BJ (cell line): ENCODE measurements at regions of chr9 and their contacts with region 1.

Region 1: GRCh38 chr9:133342069-133342406 is 5.9 kb downstream of the MED22 start:
- DNase-seq: no peak
- H3K4me3 ChIP-seq: no peak overlapping the region
- H3K27me3 ChIP-seq: no peaks in the 10 kb centered on the region
- CTCF ChIP-seq: peak; percentile 16; the same call in 1 of the 2 replicates

Region 2: DNA sequence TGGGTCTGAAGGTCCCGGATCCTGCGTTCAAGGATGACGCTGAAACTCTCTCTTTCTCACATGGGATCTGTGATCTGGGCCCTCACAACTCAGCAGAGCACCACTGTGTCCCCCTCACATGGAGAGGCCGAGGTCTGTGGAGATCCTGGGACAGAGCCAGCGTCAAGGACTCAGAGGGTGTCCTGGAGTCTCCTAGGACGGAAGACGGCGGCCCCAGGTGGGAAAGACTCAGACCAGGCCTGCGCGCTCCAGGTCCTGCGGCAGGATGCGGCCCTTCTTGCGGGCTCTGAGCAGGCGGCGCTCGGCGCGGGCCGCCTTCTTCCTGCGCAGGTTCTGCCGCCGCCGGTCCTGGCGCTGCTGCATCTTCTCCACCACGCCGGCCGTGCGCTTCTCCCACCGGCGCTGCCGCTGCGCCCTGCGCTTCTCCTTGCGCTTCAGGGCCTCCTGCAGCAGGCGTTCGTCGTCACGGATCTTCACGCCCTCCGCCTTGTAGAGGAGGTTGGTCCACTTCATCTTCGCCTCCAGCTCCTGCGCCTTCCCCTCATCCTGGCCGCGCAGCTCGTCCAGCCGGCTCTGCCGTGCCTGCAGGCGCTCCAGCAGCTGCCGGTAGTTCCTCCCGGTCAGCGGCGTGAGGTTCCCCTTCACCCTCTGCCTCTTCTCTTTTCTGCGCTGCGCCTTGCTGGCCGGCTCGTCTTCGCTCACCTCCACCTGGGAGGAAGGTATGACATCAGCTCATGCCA is 10.2 kb before region 1 on chr9:
- CTCF ChIA-PET with region 1: interaction called, 13 read pairs
- POLR2A ChIA-PET with region 1: no interaction called
- DNase-seq: no peak
- H3K4me3 ChIP-seq: no peak overlapping the region
- H3K27me3 ChIP-seq: no peaks in the 10 kb centered on the region
- CTCF ChIP-seq: no peak

Region 3: GRCh38 chr9:133437753-133438531 is 95.9 kb after region 1 on chr9:
- CTCF ChIA-PET with region 1: no interaction called
- POLR2A ChIA-PET with region 1: no interaction called
- DNase-seq: no peak
- H3K4me3 ChIP-seq: no peak overlapping the region
- H3K27me3 ChIP-seq: 0 out of 2 replicates have a peak, but pooled peaks cover 1% of the 10 kb centered on the region
- CTCF ChIP-seq: no peak